Aorta (tissue), 5 donors: ENCODE measurements at regions of chr11 and their contacts with region 1.

Region 1: GRCh38 chr11:6022956-6023355 is 7.6 kb downstream of the OR56A1 start:
- DNase-seq: no peak
- ATAC-seq: no peak
- H3K4me3 ChIP-seq: no peak overlapping the region
- H3K27ac ChIP-seq: no peak overlapping the region
- H3K4me1 ChIP-seq: no peaks in the 10 kb centered on the region
- H3K27me3 ChIP-seq: no peaks in the 10 kb centered on the region

Region 2: DNA sequence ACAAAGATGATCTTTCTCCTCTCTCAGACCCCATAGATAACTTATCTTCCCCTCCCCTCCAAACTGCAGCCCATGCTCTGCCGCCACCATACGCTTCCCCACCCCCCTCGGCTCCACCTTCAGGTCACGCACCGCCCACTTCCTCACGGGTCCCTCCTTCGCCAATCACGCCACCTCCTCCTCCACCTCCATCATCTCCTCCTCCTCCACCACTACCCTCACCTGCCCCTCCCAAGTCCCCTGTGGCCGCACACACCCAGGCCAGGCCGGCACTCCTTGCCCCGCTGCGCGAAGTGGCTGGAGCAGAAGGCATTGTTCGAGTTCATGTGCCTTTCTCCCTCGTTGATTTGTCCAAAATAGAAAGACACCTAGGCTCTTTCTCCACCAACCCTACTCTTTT is 93.4 kb before region 1 on chr11:
- intact Hi-C with region 1: no loop called
- DNase-seq: no peak
- ATAC-seq: no peak
- H3K4me3 ChIP-seq: no peak overlapping the region
- H3K27ac ChIP-seq: no peak overlapping the region
- H3K4me1 ChIP-seq: no peaks in the 10 kb centered on the region
- H3K27me3 ChIP-seq: no peaks in the 10 kb centered on the region

Region 3: GRCh38 chr11:6040874-6041273 is 17.9 kb after region 1 on chr11:
- intact Hi-C with region 1: no loop called
- DNase-seq: no peak
- ATAC-seq: no peak
- H3K4me3 ChIP-seq: no peak overlapping the region
- H3K27ac ChIP-seq: no peak overlapping the region
- H3K4me1 ChIP-seq: no peaks in the 10 kb centered on the region
- H3K27me3 ChIP-seq: peaks cover 0 to 2% of the 10 kb centered on the region in 2 donors

Region 4: DNA sequence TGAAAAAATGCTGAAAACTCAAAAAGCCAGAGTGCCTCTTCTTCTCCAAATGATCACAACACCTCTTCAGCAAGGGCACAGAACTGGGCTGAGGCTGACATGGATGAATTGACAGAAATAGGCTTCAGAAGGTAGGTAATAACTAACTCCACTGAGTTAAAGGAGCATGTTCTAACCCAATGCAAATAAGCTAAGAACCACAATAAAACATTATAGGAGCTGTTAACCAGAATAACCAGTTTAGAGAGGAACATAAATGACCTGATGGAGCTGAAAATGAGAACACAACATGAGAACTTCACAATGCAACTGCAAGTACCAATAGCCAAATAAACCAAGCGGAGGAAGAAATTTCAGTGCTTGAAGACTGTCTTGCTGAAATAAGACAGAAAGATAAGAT is 93.7 kb after region 1 on chr11:
- intact Hi-C with region 1: no loop called
- DNase-seq: no peak
- ATAC-seq: no peak
- H3K4me3 ChIP-seq: no peak overlapping the region
- H3K27ac ChIP-seq: no peak overlapping the region
- H3K4me1 ChIP-seq: no peaks in the 10 kb centered on the region
- H3K27me3 ChIP-seq: no peaks in the 10 kb centered on the region

Region 5: DNA sequence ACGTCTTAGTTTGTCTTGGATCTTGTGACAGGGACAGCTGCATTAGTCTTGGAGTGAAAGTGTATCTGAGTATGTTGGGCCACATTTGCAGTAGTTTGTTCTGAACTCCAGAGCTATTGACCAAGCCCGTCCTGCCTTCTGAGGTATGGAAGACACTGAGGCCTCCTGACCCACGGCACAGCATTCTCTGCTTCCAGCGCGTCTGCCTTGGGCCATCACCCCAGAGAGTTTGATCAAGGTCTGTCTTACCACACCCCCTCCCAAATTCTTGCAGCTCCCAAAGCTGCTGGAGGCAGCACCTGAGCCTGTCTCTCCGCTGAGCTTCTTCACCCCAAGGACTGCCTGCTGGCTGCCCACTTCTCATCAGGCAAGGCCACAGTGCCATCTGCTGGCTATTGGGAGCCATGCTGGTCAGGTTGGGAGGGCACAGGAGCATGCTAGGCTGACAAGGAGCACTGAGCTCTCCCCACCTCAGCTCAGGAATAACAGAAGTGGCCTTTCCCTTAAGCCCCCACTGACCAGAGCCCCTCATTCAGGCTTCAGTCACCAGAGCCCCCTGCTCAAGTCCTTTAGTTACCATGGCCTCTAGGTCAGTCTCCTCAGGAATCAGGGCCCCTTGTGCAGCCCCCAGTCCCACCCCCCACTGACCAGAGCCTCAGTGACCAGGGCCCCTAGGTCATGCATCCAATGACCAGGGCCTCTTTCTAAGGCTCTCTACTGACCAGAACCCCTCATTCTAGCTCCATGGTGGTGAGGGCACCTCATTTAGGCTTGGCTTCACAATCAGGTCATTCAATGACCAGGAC is 340.1 kb after region 1 on chr11:
- intact Hi-C with region 1: loop called (anchors 5 to 10 kb)
- DNase-seq: peak; percentile 84 to 92
- ATAC-seq: peak; percentile 93
- H3K4me3 ChIP-seq: no peak overlapping the region
- H3K27ac ChIP-seq: peak overlapping the region; percentile 7 to 65
- H3K4me1 ChIP-seq: peaks cover 2 to 5% of the 10 kb centered on the region in 2 donors
- H3K27me3 ChIP-seq: no peaks in the 10 kb centered on the region

Region 6: GRCh38 chr11:7272373-7272772 is 1249.4 kb after region 1 on chr11:
- intact Hi-C with region 1: no loop called
- DNase-seq: no peak
- ATAC-seq: no peak
- H3K4me3 ChIP-seq: no peak overlapping the region
- H3K27ac ChIP-seq: no peak overlapping the region
- H3K4me1 ChIP-seq: no peaks in the 10 kb centered on the region
- H3K27me3 ChIP-seq: no peaks in the 10 kb centered on the region